H1 (cell line): ENCODE measurements at regions of chr10 and their contacts with region 1.

Region 1: DNA sequence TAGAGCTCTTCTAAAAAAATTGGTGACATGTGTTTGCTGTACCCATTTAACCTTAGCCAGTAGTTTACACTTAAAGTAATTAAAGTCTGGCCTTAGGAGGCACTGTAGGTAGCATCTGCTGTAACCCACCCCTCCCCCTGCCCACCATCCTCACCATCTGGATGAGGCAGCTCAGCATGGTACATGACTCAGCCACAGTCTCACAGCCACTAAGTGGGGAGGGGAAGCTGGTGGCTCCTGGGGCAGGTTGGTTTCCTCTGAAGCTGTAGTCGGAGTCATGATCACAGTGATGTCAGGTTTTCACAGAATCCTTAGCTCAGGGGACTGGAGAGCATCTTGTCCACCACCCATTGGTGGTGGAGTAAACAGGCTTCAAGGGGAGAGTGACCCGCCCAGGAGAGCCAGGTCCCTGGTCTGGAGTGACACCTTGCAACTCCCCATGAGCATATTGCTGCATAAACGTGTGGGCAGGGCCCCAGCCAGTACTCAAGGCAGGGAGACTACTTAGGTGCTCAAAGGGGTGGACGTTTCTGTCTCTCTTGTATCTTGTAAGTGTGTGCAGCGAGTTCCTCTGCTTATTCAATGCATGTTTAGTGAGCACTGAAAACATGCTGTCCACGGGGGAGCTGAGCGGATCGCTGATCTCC is 125.9 kb downstream of the GRK5 start:
- DNase-seq: no peak
- H3K4me3 ChIP-seq: no peak overlapping the region
- H3K27ac ChIP-seq: no peak overlapping the region
- H3K4me1 ChIP-seq: peaks cover 0 to 2% (median 0%) of the 10 kb centered on the region in 4 experiments; a peak in 3 of 7 replicates
- H3K27me3 ChIP-seq: no peaks in the 10 kb centered on the region
- CTCF ChIP-seq: no peak
- EP300 ChIP-seq: no peak
- POLR2A ChIP-seq: no peak
- RAD21 ChIP-seq: no peak

Region 2: GRCh38 chr10:119320981-119321380 is 12.3 kb before region 1 on chr10:
- CTCF ChIA-PET with region 1: interaction called, 11 read pairs
- POLR2A ChIA-PET with region 1: interaction called, 4 read pairs
- DNase-seq: no peak
- H3K4me3 ChIP-seq: no peak overlapping the region
- H3K27ac ChIP-seq: no peak overlapping the region
- H3K4me1 ChIP-seq: peaks cover 10 to 26% (median 20%) of the 10 kb centered on the region in 4 experiments
- H3K27me3 ChIP-seq: no peaks in the 10 kb centered on the region
- CTCF ChIP-seq: no peak
- EP300 ChIP-seq: no peak
- POLR2A ChIP-seq: no peak
- RAD21 ChIP-seq: no peak

Region 3: DNA sequence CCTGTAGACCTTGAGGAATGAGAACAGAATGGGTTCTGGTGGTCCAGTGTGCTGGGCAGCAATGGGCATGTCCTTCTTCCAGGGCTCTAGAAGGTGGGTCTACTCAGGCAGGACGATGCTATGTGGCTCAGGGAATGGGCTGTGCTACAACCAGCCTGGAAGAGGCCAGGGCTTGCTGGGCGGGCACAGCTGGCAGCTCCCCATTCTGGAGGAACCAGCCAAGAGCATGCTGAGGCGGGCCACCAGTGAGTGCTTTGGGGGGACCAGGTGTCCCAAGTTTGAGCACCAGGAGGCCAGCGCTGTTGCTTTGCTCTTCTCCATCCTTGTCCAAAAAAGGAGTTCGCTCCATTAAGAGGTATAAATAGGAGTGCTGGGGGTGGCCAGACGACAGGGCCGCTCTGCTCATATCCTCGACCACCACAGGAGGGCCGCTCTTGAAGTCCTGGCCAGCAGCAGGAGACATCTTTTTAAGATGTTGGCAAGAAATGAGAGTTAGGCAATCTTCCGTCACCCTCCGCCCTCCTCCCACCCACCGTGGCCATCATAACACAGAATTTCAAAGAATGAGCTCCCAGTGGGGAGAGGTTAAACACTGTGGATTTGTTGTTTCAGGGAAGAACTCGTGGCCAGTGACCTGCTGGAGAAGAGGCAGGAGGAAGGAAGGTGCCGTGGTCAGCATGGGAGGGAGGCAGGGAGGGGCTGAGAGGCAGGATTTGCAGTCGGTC is 15.4 kb after region 1 on chr10:
- CTCF ChIA-PET with region 1: interaction called, 14 read pairs
- POLR2A ChIA-PET with region 1: interaction called, 8 read pairs
- DNase-seq: no peak
- H3K4me3 ChIP-seq: no peak overlapping the region
- H3K27ac ChIP-seq: no peak overlapping the region
- H3K4me1 ChIP-seq: no peaks in the 10 kb centered on the region
- H3K27me3 ChIP-seq: no peaks in the 10 kb centered on the region
- CTCF ChIP-seq: no peak
- EP300 ChIP-seq: no peak
- POLR2A ChIP-seq: no peak
- RAD21 ChIP-seq: no peak